B cell (primary cell): ENCODE measurements at regions of chr15 and their contacts with region 1.

Region 1: GRCh38 chr15:57298843-57299550 is 77.3 kb upstream of the CGNL1 start:
- DNase-seq: peak; percentile 62
- ATAC-seq: no peak
- H3K4me3 ChIP-seq: peak overlapping the region in 4 of 5 experiments; percentile 95 to 100 (median 97)
- H3K4me3 Mint-ChIP-seq: peak overlapping the region; percentile 99
- H3K27ac ChIP-seq: peak overlapping the region; percentile 96 to 99
- H3K27ac Mint-ChIP-seq: peak overlapping the region; percentile 98
- H3K4me1 ChIP-seq: peaks cover 43 to 50% of the 10 kb centered on the region in 2 donors
- H3K4me1 Mint-ChIP-seq: peaks cover 58% of the 10 kb centered on the region
- H3K27me3 ChIP-seq: no peaks in the 10 kb centered on the region
- H3K27me3 Mint-ChIP-seq: no peaks in the 10 kb centered on the region
- CTCF ChIP-seq: no peak

Region 2: GRCh38 chr15:57259568-57260040 is 39.4 kb before region 1 on chr15:
- CTCF ChIA-PET with region 1: interaction called, 11 read pairs
- POLR2A ChIA-PET with region 1: interaction called, 3 read pairs
- intact Hi-C with region 1: loop called (anchors 2 kb)
- DNase-seq: peak; percentile 64
- ATAC-seq: peak; percentile 97
- H3K4me3 ChIP-seq: peak overlapping the region in 1 of 5 experiments; percentile 27
- H3K4me3 Mint-ChIP-seq: peak overlapping the region; percentile 62
- H3K27ac ChIP-seq: peak overlapping the region; percentile 32 to 71
- H3K27ac Mint-ChIP-seq: peak overlapping the region; percentile 60
- H3K4me1 ChIP-seq: peaks cover 7 to 15% of the 10 kb centered on the region in 2 donors
- H3K4me1 Mint-ChIP-seq: peaks cover 17% of the 10 kb centered on the region
- H3K27me3 ChIP-seq: no peaks in the 10 kb centered on the region
- H3K27me3 Mint-ChIP-seq: no peaks in the 10 kb centered on the region
- CTCF ChIP-seq: no peak

Region 3: GRCh38 chr15:57286446-57287122 is 12.4 kb before region 1 on chr15:
- CTCF ChIA-PET with region 1: interaction called, 11 read pairs
- POLR2A ChIA-PET with region 1: interaction called, 109 read pairs
- intact Hi-C with region 1: loop called (anchors 1 kb)
- DNase-seq: peak; percentile 50
- ATAC-seq: peak; percentile 49
- H3K4me3 ChIP-seq: peak overlapping the region in 1 of 5 experiments; percentile 15
- H3K4me3 Mint-ChIP-seq: peak overlapping the region; percentile 51
- H3K27ac ChIP-seq: peak overlapping the region; percentile 95
- H3K27ac Mint-ChIP-seq: peak overlapping the region; percentile 98
- H3K4me1 ChIP-seq: peaks cover 88 to 91% of the 10 kb centered on the region in 2 donors
- H3K4me1 Mint-ChIP-seq: peaks cover 86% of the 10 kb centered on the region
- H3K27me3 ChIP-seq: no peaks in the 10 kb centered on the region
- H3K27me3 Mint-ChIP-seq: no peaks in the 10 kb centered on the region
- CTCF ChIP-seq: no peak